Activated naive CD4-positive, alpha-beta T cell treated with anti-CD3 and anti-CD28 coated beads for 36 hours (primary cell): ENCODE measurements at regions of chr10 and their contacts with region 1.

Region 1: GRCh38 chr10:17228091-17228940 is at the start of gene VIM:
- DNase-seq: peak; percentile 90
- H3K4me3 Mint-ChIP-seq: peak within 1 kb of the TSS; percentile 80
- H3K27ac Mint-ChIP-seq: peak within 1 kb of the TSS; percentile 73
- H3K4me1 Mint-ChIP-seq: peaks cover 45% of the 10 kb centered on the region
- H3K27me3 Mint-ChIP-seq: peaks cover 2% of the 10 kb centered on the region
- total RNA-seq, gene VIM: 58.3 to 60.6 TPM

Region 2: DNA sequence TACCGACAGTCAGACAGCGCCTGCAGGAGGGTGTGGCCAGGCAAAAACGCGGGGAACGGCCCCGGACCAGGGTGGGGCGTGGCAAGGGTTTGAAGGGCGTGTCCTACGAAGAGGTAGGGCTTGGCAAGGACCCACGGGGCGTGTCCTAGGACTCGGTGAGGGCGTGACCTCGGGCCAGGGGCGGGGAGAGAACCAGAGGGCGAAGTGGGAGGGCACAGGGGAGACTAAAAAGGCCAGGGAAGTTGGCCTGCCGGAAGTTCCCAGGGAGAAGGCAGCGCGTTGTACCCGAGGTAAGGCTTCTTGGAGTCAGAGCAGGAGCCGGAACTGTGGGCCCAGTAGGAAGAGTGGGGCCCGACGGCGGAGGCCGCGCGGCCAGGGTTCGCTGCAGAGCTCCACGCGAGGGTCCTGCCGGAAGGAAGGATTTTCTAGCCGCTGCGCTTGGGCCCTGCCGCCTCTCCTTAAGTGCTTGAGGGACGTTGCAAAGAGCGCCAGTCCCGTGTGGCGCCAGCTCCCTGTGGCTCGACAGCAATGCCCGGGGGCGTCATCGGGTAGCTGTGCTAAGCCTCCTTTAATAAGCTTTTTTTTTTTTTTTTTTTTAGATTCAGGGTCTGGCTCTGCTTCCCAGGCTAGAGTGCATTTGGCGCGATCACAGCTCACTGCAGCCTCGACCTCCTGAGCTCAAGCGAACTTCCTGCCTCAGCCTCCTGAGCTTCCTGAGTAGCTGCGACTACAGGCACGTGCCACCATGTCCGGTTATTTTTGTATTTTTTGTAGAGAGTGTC is 791.4 kb before region 1 on chr10 and contains the start of gene PTER:
- CTCF ChIA-PET with region 1: no interaction called
- intact Hi-C with region 1: loop called (anchors 5 kb)
- DNase-seq: peak; percentile 100
- H3K4me3 Mint-ChIP-seq: peak within 1 kb of the TSS; percentile 85
- H3K27ac Mint-ChIP-seq: peak within 1 kb of the TSS; percentile 88
- H3K4me1 Mint-ChIP-seq: peaks cover 43% of the 10 kb centered on the region
- H3K27me3 Mint-ChIP-seq: no peaks in the 10 kb centered on the region
- total RNA-seq, gene PTER: 15.0 to 16.7 TPM

Region 3: DNA sequence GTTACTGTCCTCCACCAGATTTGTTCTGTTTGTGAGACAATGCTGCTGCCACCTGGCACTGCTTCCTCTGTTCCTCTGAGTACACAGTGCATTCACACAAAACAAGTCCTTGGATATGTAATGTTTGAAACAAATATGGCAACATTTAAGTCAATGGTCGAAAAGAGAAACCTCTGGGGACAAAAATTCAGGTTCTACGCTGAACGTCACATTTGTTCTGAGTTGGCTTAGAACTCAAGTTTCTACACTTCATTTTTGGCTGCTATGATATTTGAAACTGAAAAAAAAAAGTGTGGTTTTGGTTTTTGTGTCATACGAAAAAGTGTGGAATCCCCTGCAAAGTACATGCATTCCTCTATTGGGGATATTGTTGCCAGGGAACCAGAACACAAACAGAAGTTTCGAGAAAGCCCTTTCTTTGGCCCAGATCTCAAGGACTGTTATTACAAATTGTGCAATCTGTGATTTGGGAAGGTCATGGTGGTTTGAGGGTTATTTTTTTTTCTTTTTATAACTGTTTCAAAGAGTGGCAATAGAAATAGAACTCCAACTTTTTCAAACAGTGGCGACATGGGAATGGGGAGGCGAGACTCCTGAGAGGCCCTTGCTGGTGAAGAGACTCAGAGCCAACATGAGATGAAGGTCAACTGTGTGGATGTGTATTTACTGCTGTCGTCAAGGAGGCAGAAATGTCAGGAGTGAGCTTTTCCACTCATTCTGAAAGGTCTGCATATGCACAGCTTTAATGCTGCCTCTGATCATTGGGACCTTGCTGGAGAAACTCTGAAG is 226.2 kb before region 1 on chr10:
- CTCF ChIA-PET with region 1: no interaction called
- intact Hi-C with region 1: loop called (anchors 1 kb)
- DNase-seq: peak; percentile 44
- H3K4me3 Mint-ChIP-seq: no peak overlapping the region
- H3K27ac Mint-ChIP-seq: peak overlapping the region; percentile 5
- H3K4me1 Mint-ChIP-seq: peaks cover 57% of the 10 kb centered on the region
- H3K27me3 Mint-ChIP-seq: peaks cover 5% of the 10 kb centered on the region

Region 4: GRCh38 chr10:17144757-17145156 is 83.6 kb before region 1 on chr10:
- CTCF ChIA-PET with region 1: interaction called, 8 read pairs
- intact Hi-C with region 1: loop called (anchors 1 kb)
- DNase-seq: peak; percentile 84
- H3K4me3 Mint-ChIP-seq: no peak overlapping the region
- H3K27ac Mint-ChIP-seq: peak overlapping the region; percentile 47
- H3K4me1 Mint-ChIP-seq: peaks cover 28% of the 10 kb centered on the region
- H3K27me3 Mint-ChIP-seq: no peaks in the 10 kb centered on the region

Region 5: DNA sequence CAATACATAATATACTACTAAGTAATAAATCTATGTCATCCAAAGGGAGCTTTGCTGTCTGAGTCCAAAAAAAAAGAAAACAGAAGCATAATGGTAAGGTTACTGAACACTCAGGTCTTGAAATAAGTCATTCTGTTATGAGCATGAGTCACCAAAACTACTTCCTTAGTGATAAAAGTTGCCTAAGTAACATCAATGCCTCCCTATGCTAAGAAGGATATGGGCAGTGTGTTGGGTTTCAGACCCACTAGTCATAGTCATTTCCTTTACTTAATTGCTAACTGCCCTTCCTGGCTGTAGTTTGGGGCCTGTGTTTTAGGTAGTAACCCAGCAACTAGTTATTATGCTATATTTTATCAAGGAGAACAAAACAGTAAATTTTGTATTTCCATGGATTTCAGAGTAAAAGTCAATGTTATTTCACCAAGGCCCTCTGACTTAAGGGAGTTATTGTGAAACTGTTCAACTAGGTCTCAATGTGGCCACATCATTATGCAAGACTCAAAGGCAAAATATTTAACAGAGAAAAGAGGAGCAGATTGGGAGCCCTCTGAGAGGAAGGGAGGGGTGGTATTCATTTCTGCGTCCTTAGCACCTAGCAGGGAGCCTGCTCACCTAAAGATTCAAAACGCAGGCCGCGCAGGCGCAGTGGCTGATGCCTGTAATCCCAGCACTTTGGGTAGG is 12.0 kb before region 1 on chr10:
- CTCF ChIA-PET with region 1: interaction called, 9 read pairs
- intact Hi-C with region 1: loop called (anchors 1 kb)
- DNase-seq: peak; percentile 55
- H3K4me3 Mint-ChIP-seq: no peak overlapping the region
- H3K27ac Mint-ChIP-seq: peak overlapping the region; percentile 54
- H3K4me1 Mint-ChIP-seq: peaks cover 33% of the 10 kb centered on the region
- H3K27me3 Mint-ChIP-seq: no peaks in the 10 kb centered on the region

Region 6: GRCh38 chr10:17643755-17644484 is 415.6 kb after region 1 on chr10 and contains the start of gene STAM:
- CTCF ChIA-PET with region 1: no interaction called
- intact Hi-C with region 1: loop called (anchors 5 kb)
- DNase-seq: peak; percentile 93
- H3K4me3 Mint-ChIP-seq: peak within 1 kb of the TSS; percentile 88
- H3K27ac Mint-ChIP-seq: peak within 1 kb of the TSS; percentile 99
- H3K4me1 Mint-ChIP-seq: peaks cover 49% of the 10 kb centered on the region
- H3K27me3 Mint-ChIP-seq: no peaks in the 10 kb centered on the region
- total RNA-seq, gene STAM: 16.3 to 16.6 TPM